ENCODE measurements at regions of chr1 and their contacts with region 1.

Region 1: DNA sequence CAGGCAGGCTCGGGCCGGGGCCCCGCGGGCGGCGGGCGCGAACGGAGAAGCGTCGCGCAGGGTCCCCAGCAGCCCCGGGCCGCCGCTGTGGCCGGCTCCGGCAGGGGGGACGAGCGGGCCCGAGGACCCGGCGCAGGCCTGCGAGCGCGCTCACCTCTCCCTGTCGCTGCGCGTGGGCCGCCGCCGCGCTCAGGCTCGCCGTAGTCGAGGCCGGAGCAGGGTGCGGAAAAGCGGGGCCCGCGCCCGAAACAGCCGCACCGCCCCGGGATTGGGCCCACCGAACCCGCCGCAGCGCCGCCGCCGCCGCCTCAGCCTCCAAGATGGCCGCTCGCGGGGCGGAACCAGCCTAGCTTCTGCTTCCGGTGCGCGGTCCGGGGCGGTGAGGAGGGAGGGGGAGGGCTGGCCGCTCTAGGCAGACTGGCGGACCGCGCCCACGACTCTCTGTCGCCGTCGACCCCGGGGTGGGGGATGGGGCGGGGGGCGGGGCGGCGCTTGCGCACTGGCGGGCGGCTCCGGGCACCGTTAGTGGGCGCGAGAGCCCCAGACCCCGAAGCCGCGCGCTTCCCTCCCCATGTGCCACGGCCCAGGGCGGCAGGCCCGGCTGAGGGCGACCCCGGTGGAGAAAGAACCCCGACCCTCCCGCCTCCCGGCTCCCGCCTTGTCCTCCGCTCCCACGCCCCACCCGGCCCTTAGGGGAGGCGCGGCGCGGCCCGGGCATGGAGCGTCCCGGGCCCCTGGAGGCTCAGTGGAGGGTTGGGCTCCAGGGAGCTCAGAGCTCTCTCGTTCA is at the start of gene UBE2J2:
- DNase-seq: peak; percentile 97
- ATAC-seq: peak; percentile 94
- H3K4me3 Mint-ChIP-seq: peak within 1 kb of the TSS; percentile 85
- H3K27ac Mint-ChIP-seq: peak within 1 kb of the TSS; percentile 83
- H3K4me1 Mint-ChIP-seq: peaks cover 36% of the 10 kb centered on the region
- H3K27me3 Mint-ChIP-seq: no peaks in the 10 kb centered on the region
- total RNA-seq, gene UBE2J2: 57.4 to 60.2 TPM

Region 2: DNA sequence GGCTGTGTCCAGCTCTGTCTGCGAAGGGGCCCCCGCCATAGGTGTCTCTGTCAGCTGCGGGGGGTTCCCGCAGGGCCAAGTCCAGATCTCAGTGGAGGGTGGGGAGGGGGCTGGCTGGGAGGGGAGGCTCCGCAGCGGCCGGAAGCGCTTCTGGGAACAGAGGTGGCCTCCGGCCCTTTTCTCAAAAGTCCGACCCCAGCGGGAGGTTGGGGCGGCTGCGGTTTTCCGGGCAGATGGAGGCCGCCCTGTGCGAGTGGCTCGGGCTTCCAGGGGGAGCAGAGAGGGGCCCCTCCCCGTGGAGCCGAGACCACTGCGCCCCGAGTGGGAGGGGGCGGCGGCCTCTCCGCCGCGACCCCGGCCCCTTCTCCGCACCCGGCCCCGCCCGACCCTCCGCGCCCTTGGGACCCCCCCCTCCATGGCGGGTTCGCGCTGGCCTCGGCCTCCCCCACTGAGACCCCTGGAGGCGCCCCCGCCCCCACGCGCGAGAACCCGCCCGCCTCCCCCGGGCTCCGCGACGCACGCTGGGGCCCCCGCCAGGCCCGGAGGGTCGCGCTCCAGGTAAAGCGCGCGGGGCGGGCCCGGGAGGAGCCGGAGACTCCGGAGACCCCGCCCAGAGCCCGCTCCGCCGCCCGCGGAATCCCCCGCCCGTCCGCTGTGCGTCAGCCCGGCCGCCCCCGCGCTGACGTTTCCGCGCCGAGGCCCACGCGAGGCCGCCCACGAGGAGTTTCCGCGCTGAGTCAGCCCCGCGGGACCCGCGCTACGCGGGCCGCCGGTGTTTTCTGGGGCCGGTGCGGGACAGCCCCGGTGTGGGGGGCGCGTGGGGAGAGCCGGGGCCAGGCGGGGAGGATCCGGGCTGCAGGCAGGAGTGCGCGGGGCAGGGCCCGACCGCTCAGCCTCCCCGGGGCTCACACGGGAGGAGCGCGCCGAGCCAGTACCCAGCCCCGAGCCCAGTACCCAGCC is 72.6 kb before region 1 on chr1:
- CTCF ChIA-PET with region 1: no interaction called
- POLR2A ChIA-PET with region 1: interaction called, 3 read pairs
- intact Hi-C with region 1: loop called in 1 of 2 experiments (anchors 2 kb)
- DNase-seq: peak; percentile 94
- ATAC-seq: peak; percentile 78
- H3K4me3 Mint-ChIP-seq: peak overlapping the region; percentile 69
- H3K27ac Mint-ChIP-seq: peak overlapping the region; percentile 85
- H3K4me1 Mint-ChIP-seq: peaks cover 12% of the 10 kb centered on the region
- H3K27me3 Mint-ChIP-seq: no peaks in the 10 kb centered on the region

Region 3: GRCh38 chr1:1324521-1325287 is 51.0 kb after region 1 on chr1 and contains the starts of genes CPTP and INTS11:
- CTCF ChIA-PET with region 1: no interaction called
- POLR2A ChIA-PET with region 1: no interaction called
- intact Hi-C with region 1: loop called in 1 of 2 experiments (anchors 1 kb)
- DNase-seq: peak; percentile 98
- ATAC-seq: peak; percentile 90
- H3K4me3 Mint-ChIP-seq: peak within 1 kb of the TSS; percentile 80
- H3K27ac Mint-ChIP-seq: peak within 1 kb of the TSS; percentile 83
- H3K4me1 Mint-ChIP-seq: peaks cover 31% of the 10 kb centered on the region
- H3K27me3 Mint-ChIP-seq: no peaks in the 10 kb centered on the region
- total RNA-seq, gene CPTP: 9.9 to 11.4 TPM
- total RNA-seq, gene INTS11: 117 to 151 TPM

Region 4: GRCh38 chr1:1399187-1399871 is 125.6 kb after region 1 on chr1 and contains the start of gene CCNL2:
- CTCF ChIA-PET with region 1: no interaction called
- POLR2A ChIA-PET with region 1: no interaction called
- intact Hi-C with region 1: loop called in 1 of 2 experiments (anchors 1 kb)
- DNase-seq: peak; percentile 100
- ATAC-seq: peak; percentile 97
- H3K4me3 Mint-ChIP-seq: peak within 1 kb of the TSS; percentile 93
- H3K27ac Mint-ChIP-seq: peak within 1 kb of the TSS; percentile 91
- H3K4me1 Mint-ChIP-seq: peaks cover 52% of the 10 kb centered on the region
- H3K27me3 Mint-ChIP-seq: no peaks in the 10 kb centered on the region
- total RNA-seq, gene CCNL2: 73.6 to 89.7 TPM

Region 5: DNA sequence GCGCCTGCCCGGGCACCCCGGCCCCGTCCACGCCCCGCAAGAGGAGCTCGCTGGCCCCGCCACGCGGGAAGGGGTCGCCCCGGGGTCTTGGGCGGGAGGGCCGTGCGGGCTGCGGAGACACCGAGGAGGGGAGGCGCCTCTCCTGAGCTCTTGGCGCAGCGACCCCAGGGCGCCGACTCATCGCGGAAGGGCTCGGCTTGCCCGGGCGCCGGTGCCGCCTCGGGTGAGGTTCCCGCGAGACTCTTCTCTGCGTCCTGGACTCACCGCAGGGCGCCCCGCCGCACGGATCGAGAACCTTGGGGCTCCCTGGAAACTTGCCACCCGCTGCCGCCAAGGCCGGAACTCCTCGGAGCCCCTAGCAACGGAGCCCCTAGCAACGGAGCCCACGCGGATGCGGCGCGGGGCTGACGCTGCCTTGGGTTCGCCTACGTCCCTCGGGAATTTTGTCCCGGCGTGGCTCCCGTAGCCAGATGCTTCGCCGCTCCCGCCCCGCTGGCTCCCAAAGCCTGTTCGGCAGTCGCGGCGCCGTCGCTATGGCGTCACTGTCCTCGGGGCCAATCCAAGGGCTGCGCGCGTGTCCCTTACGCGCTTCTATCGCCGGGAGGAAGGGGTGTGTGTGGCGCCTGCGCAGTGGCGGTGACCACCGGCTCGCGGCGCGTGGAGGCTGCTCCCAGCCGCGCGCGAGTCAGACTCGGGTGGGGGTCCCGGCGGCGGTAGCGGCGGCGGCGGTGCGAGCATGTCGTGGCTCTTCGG is 238.0 kb after region 1 on chr1 and contains the start of gene ATAD3A:
- CTCF ChIA-PET with region 1: no interaction called
- POLR2A ChIA-PET with region 1: no interaction called
- intact Hi-C with region 1: loop called in 1 of 2 experiments (anchors 10 kb)
- DNase-seq: peak; percentile 99
- ATAC-seq: peak; percentile 97
- H3K4me3 Mint-ChIP-seq: peak within 1 kb of the TSS; percentile 93
- H3K27ac Mint-ChIP-seq: peak within 1 kb of the TSS; percentile 97
- H3K4me1 Mint-ChIP-seq: peaks cover 7% of the 10 kb centered on the region
- H3K27me3 Mint-ChIP-seq: no peaks in the 10 kb centered on the region
- total RNA-seq, gene ATAD3A: 39.9 to 42.9 TPM